ENCODE measurements at regions of chr7 and their contacts with region 1.

Region 1: GRCh38 chr7:5363729-5364128 is 59.9 kb downstream of the TNRC18 start:
- DNase-seq: no peak
- H3K4me3 ChIP-seq: no peak overlapping the region
- H3K27ac ChIP-seq: peak overlapping the region in 41 of 59 donors; percentile 7 to 83 (median 49)
- H3K27me3 ChIP-seq: no peaks in the 10 kb centered on the region
- CTCF ChIP-seq: no peak

Region 2: GRCh38 chr7:4951903-4952636 is 411.7 kb before region 1 on chr7:
- intact Hi-C with region 1: no loop called
- DNase-seq: no peak
- H3K4me3 ChIP-seq: no peak overlapping the region
- H3K27ac ChIP-seq: no peak overlapping the region
- H3K27me3 ChIP-seq: peaks cover 0 to 3% (median 0%) of the 10 kb centered on the region in 45 donors
- CTCF ChIP-seq: no peak

Region 3: DNA sequence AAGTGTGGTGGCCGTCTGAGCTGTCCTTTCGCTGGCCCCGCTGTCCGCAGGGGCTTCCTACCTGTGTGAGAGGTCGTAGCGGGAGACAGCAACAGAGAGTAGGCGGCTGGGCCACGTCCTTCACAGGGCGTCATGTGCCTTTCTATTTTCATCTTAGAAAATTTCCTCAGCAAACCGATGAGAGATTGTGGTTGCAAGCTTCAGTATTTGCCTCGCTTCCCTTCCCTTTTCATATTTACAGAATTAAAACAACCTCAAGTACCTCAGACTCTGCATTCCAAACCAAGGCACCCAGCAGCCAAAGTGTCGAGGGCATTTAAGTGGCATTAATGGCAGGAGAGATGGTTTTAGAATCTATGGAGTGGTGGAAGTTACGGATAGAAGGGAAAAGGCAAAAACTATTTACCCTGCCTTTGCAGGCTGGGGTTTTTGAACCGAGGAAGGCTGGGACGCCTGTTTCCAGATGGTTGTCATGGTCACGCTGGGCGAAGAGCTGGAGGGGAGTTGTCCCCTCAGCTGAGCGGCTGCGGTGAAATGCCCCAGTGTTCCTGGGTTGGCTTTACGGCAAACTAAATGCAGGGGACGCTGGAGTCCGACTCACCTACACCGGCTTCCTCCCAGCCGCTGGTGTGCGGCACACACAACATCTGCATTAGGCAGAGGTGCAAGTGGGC is 131.8 kb before region 1 on chr7:
- intact Hi-C with region 1: loop called in 1 of 2 experiments (anchors 10 kb)
- DNase-seq: peak in 1 of 10 donors; percentile 38
- H3K4me3 ChIP-seq: no peak overlapping the region
- H3K27ac ChIP-seq: peak overlapping the region in 43 of 59 donors; percentile 2 to 70 (median 44)
- H3K27me3 ChIP-seq: no peaks in the 10 kb centered on the region
- CTCF ChIP-seq: no peak

Region 4: DNA sequence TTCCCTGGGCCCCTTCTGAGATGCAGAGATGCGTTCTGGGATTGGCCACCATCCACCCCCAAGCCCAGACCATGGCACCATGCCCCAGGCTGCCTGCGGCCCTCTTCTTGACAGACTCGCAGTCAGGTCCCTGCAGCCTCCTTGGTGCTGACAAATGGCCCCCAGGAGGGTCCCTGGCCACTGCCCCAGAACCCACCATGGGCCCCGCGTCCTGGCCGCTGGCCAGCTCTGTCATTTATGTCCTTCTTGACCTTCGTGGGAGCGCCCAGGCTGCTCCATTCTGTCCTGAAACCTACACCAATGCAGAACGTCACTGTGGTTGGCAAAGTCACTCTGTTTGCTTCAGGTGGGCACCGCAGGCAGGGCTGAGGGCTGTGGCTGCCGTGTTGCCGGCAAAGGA is 120.5 kb before region 1 on chr7:
- intact Hi-C with region 1: loop called (anchors 5 to 10 kb)
- DNase-seq: no peak
- H3K4me3 ChIP-seq: no peak overlapping the region
- H3K27ac ChIP-seq: no peak overlapping the region
- H3K27me3 ChIP-seq: no peaks in the 10 kb centered on the region
- CTCF ChIP-seq: no peak

Region 5: DNA sequence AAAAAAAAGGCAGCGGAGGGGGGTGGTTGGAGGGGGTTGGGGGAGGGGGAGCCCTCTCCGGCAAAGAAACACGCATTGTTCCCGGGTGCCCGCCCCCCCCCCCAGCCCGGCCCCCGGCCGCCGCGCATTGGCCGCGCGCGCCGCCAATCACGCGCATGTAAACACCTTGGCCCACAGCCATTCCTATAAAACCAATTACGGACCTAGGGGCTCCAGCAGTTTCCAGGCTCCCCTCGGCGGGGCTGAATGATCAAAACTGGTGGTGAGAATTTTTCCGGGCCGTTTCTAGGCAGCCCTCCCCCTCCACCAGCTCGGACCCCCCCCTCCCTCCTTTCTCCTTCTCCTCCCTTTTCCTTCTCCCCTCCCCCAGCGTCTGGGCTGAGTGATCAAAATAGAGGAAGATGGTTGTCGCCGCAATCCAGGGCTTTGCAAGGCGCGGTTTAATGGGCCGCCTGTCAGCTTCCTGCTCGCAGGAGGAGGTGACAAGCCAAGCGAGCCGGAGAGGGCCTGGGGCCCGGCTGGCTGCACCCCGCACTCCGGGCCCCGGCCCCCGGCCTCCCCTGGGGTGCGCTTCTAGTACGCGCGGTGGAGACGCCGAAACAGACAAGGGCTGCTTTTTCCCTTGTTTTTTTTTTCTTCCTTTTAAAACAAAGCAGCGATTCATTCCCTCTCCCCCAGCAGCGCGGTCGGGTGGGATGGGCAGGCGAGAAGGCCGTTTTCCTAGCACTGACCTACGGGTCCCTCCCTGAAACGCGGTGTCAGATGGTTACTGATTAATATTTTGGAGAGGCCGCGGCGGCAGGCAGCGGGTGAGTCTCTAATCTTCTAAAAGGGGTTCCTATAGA is 60.3 kb after region 1 on chr7:
- intact Hi-C with region 1: loop called in 1 of 2 experiments (anchors 5 kb)
- DNase-seq: peak; percentile 87 to 97 (median 94)
- H3K4me3 ChIP-seq: peak overlapping the region; percentile 69 to 99 (median 91)
- H3K27ac ChIP-seq: peak overlapping the region; percentile 95 to 100 (median 100)
- H3K27me3 ChIP-seq: no peaks in the 10 kb centered on the region
- CTCF ChIP-seq: peak in 2 of 56 donors; percentile 16 to 20

Region 6: DNA sequence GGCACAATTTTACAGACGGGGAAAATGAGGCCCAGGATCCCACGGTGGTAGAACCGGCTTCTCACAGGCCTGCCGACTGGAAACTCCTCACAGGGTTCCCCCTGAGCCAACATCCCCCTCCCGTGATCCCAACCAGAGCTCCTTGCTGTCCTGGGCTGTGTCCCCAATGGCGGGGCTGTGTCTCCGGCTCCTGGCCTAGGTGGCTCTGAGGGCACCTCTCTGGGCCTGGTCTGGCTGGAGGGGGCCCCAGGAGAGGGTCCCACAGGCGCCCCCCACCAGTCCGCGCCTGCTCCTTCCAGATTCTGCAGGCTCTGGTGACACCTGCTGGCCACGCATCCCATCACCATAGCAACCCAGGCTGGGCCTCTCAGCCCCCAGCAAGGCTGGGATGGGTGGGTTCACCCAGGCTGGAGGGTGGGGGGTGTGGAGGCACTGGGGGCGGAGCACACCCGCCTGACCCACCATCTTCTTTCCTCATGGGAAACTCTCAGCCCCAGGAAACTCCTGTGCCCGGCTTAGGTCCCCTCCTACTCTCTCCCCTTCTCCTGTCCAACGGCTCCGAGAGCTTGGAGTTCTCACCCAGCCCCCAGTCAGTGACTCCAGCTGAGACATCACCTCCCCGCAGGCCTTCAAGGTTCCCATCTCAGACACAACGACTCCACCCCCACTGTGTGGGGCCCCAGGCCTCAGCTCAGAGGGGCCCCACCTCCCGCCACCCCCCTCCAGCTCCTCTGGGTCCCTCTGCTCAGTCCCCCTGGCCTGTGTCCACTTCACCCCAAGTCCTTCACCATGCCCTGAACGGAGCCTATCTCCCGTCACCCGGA is 87.0 kb after region 1 on chr7:
- intact Hi-C with region 1: loop called (anchors 2 to 10 kb)
- DNase-seq: peak in 9 of 10 donors; percentile 44 to 76 (median 61)
- H3K4me3 ChIP-seq: peak overlapping the region in 10 of 59 donors; percentile 1 to 36 (median 16)
- H3K27ac ChIP-seq: peak overlapping the region in 16 of 59 donors; percentile 0 to 66 (median 30)
- H3K27me3 ChIP-seq: no peaks in the 10 kb centered on the region
- CTCF ChIP-seq: peak in 55 of 56 donors; percentile 60 to 90 (median 76)